Activated CD4-positive, alpha-beta memory T cell treated with anti-CD3 and anti-CD28 coated beads for 36 hours (primary cell): ENCODE measurements at regions of chr6 and their contacts with region 1.

Region 1: DNA sequence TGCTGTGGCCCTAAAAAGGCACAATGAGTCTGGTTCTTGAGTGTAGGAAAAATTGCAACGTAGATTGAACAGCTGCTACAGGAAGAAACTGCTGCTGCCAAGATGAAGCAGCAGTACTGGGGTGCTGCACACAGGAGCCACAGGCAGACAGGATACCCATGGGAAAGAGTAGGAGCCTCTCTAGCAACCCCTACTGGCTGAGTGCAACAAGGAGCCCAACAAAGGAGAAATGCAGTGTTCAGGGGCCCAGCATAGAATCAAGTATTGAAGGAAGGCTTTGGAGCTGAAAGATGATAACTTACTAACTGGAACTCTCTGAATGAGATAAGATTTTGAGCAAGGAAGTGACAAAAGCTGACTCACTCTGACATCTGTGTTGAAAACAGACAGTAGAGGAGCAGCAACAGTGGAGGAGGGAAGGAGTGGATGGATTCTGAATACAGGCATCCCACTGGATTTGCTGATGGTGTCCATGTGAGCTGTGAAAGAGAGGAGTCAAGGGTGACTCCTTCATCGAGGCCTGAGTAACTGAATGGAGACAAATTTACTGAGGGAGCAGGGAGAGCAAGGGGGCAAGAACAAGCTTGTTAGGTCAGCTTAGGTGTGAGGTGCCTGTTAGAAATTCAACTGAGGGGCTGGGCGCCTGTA is 534.7 kb upstream of the JARID2 start:
- DNase-seq: peak; percentile 86
- H3K4me3 Mint-ChIP-seq: peak overlapping the region; percentile 80
- H3K27ac Mint-ChIP-seq: peak overlapping the region; percentile 96
- H3K4me1 Mint-ChIP-seq: peaks cover 70% of the 10 kb centered on the region
- H3K27me3 Mint-ChIP-seq: no peaks in the 10 kb centered on the region

Region 2: DNA sequence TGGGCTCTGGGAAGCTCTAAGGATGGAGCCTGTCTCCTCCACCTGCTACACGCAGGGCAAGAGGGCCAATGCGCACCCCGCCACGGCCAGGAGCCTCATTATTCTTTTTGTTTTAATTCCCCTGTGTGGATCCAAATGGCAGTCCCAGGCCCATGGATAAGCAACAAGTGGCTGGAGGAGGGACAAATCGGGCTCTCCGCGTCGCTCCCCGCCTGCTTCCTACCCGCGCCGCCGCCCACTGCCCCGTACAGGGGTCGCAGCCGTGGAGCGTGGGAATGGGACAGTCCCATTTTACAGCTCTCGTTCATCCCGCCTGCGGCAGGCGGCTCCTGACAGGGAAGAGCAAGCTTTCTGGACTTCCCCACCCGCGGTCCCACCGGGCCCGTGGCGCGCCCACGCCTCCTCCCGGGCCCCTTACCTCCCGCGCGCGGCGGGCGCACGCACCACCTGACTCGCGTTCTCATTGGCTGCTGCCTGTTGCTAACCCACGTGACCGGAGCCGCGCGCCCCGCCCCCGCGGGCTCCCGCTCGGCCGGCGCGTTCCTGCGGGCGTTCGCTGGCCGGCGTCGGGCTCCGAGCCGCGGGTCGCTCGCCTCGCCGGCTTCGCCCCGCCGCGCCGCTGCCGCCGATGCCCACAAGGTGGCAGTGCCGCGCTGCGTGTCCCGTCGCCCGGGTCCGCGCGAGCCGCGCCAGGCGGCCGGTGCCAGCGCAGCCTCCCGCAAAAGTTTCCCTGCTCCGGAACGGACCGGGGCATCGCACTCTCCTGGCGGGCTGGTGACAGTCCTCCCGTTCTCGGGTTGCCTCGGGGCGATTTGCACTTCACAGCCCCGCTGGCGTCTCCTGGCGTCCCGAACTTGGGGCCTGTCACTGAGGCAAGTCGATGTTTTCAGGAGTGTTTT is 500.3 kb before region 1 on chr6:
- CTCF ChIA-PET with region 1: interaction called, 13 read pairs
- POLR2A ChIA-PET with region 1: interaction called, 4 read pairs
- intact Hi-C with region 1: loop called (anchors 1 kb)
- DNase-seq: peak; percentile 94
- H3K4me3 Mint-ChIP-seq: peak overlapping the region; percentile 74
- H3K27ac Mint-ChIP-seq: peak overlapping the region; percentile 85
- H3K4me1 Mint-ChIP-seq: peaks cover 17% of the 10 kb centered on the region
- H3K27me3 Mint-ChIP-seq: no peaks in the 10 kb centered on the region

Region 3: DNA sequence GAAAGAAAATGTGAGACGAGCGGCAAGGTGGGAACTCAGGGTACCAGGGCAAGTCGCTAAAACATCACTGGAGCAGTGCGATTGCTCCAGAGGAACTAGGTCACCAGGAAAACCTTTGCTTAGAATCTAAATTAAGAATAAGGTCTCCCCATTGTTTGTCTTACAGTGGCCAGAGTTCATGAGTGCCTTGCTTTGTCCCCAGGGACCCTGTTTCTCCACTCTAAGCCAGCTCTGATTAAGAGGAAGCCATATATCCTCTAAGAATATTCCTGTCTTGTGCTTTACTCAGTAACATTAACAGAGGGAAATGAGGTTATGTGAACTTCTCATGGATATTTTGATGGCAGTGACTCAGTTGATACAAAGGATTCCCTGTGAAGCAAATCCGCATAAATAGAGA is 287.9 kb before region 1 on chr6:
- CTCF ChIA-PET with region 1: no interaction called
- POLR2A ChIA-PET with region 1: interaction called, 4 read pairs
- intact Hi-C with region 1: loop called (anchors 1 kb)
- DNase-seq: no peak
- H3K4me3 Mint-ChIP-seq: no peak overlapping the region
- H3K27ac Mint-ChIP-seq: peak overlapping the region; percentile 73
- H3K4me1 Mint-ChIP-seq: peaks cover 46% of the 10 kb centered on the region
- H3K27me3 Mint-ChIP-seq: no peaks in the 10 kb centered on the region

Region 4: GRCh38 chr6:14542670-14543366 is 168.4 kb before region 1 on chr6:
- CTCF ChIA-PET with region 1: no interaction called
- POLR2A ChIA-PET with region 1: interaction called, 3 read pairs
- intact Hi-C with region 1: loop called (anchors 1 kb)
- DNase-seq: peak; percentile 90
- H3K4me3 Mint-ChIP-seq: no peak overlapping the region
- H3K27ac Mint-ChIP-seq: peak overlapping the region; percentile 53
- H3K4me1 Mint-ChIP-seq: peaks cover 31% of the 10 kb centered on the region
- H3K27me3 Mint-ChIP-seq: peaks cover 2% of the 10 kb centered on the region

Region 5: DNA sequence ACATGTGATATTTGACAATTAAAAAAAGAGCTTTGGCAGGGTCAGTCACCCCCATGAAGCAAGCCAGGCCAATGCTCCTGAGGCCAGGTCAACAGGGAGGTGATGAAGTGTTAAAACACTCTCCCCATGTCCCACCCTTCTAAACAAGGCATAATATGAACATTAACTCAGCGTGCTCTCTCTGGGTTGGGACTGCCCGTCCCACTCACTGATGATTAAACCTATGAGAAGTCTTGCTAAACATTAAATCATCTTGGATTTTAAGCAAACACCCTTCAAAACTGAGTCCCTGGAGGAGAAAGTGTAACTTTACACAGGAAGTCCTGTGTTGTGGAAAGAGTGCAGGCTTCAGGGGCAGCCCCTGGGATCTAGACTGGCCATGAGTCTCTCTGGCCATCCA is 35.1 kb before region 1 on chr6:
- CTCF ChIA-PET with region 1: interaction called, 3 read pairs
- POLR2A ChIA-PET with region 1: interaction called, 6 read pairs
- intact Hi-C with region 1: loop called (anchors 1 kb)
- DNase-seq: peak; percentile 35
- H3K4me3 Mint-ChIP-seq: no peak overlapping the region
- H3K27ac Mint-ChIP-seq: peak overlapping the region; percentile 80
- H3K4me1 Mint-ChIP-seq: peaks cover 43% of the 10 kb centered on the region
- H3K27me3 Mint-ChIP-seq: no peaks in the 10 kb centered on the region

Region 6: DNA sequence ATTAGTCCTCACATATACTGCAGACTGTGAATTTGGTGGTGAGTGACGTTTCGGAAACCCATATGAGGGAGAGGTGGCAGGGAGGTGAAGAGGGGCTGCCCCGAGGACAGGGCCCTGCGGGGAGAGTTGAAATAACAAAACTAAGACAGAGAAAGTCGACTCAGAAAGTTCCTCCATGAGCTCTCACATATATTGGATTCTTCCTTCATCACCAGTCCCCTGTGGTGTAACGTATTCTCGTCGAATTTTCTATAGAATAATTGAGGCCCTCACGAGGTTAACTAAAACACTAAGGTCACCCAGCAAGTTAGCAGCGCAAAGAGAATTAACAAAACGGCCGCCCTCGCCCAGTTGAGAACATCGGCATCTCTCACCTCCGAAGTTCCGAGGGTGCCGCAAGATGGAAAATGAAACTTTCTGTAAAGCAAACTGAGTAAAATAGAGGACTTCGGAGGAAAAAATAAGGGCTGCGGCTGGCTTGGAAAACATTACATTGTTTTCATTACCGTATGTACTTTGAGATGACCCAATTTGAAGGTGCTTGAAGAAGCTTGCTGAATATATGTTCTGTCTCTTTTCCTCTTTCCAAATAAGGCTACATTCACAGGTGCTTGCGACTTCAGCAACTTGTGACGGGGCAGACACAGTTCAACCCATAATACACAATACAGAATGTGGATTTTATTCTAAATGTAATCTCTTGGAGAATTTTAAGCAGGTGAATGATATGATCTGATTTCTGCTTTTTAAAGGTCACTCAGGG is 43.8 kb after region 1 on chr6:
- CTCF ChIA-PET with region 1: interaction called, 7 read pairs
- POLR2A ChIA-PET with region 1: interaction called, 9 read pairs
- intact Hi-C with region 1: loop called (anchors 2 kb)
- DNase-seq: peak; percentile 90
- H3K4me3 Mint-ChIP-seq: peak overlapping the region; percentile 61
- H3K27ac Mint-ChIP-seq: peak overlapping the region; percentile 100
- H3K4me1 Mint-ChIP-seq: peaks cover 73% of the 10 kb centered on the region
- H3K27me3 Mint-ChIP-seq: no peaks in the 10 kb centered on the region

Region 7: GRCh38 chr6:14828201-14828611 is 117.0 kb after region 1 on chr6:
- CTCF ChIA-PET with region 1: no interaction called
- POLR2A ChIA-PET with region 1: no interaction called
- intact Hi-C with region 1: no loop called
- DNase-seq: no peak
- H3K4me3 Mint-ChIP-seq: no peak overlapping the region
- H3K27ac Mint-ChIP-seq: no peak overlapping the region
- H3K4me1 Mint-ChIP-seq: no peaks in the 10 kb centered on the region
- H3K27me3 Mint-ChIP-seq: peaks cover 3% of the 10 kb centered on the region